ENCODE measurements at regions of chr17 and their contacts with region 1.

Region 1: GRCh38 chr17:39872751-39873150 is 4.7 kb downstream of the ZPBP2 start:
- DNase-seq: no peak
- ATAC-seq: no peak
- H3K4me3 ChIP-seq: no peak overlapping the region
- H3K27ac ChIP-seq: no peak overlapping the region
- H3K4me1 ChIP-seq: no peaks in the 10 kb centered on the region
- H3K27me3 ChIP-seq: peaks cover 5 to 63% (median 11%) of the 10 kb centered on the region in 9 donors
- CTCF ChIP-seq: peak in 5 of 12 donors; percentile 14 to 51 (median 32)
- POLR2A ChIP-seq: no peak

Region 2: GRCh38 chr17:39972271-39972670 is 99.5 kb after region 1 on chr17:
- intact Hi-C with region 1: loop called in 4 of 10 experiments (anchors 5 to 10 kb)
- DNase-seq: no peak
- ATAC-seq: peak in 2 of 4 donors; percentile 26 to 59
- H3K4me3 ChIP-seq: no peak overlapping the region
- H3K27ac ChIP-seq: peak overlapping the region in 1 of 12 donors; percentile 81
- H3K4me1 ChIP-seq: peaks cover 0 to 63% (median 0%) of the 10 kb centered on the region in 12 donors
- H3K27me3 ChIP-seq: peaks cover 0 to 11% (median 0%) of the 10 kb centered on the region in 9 donors
- CTCF ChIP-seq: no peak
- POLR2A ChIP-seq: no peak

Region 3: GRCh38 chr17:40021451-40021971 is 148.8 kb after region 1 on chr17:
- intact Hi-C with region 1: no loop called
- DNase-seq: peak in 1 of 5 donors; percentile 47
- ATAC-seq: peak in 2 of 4 donors; percentile 2 to 23
- H3K4me3 ChIP-seq: no peak overlapping the region
- H3K27ac ChIP-seq: peak overlapping the region in 4 of 12 donors; percentile 13 to 38 (median 32)
- H3K4me1 ChIP-seq: peaks cover 0 to 55% (median 23%) of the 10 kb centered on the region in 12 donors
- H3K27me3 ChIP-seq: no peaks in the 10 kb centered on the region
- CTCF ChIP-seq: no peak
- POLR2A ChIP-seq: no peak

Measured in heart left ventricle (tissue), 16 donors.